ENCODE measurements at regions of chr13 and their contacts with region 1.

Region 1: GRCh38 chr13:50801087-50801931 is 42.2 kb downstream of the DLEU7 start:
- DNase-seq: peak; percentile 37
- H3K4me3 ChIP-seq: no peak overlapping the region
- H3K27ac ChIP-seq: no peak overlapping the region
- H3K27me3 ChIP-seq: no peaks in the 10 kb centered on the region
- CTCF ChIP-seq: peak; percentile 85

Region 2: GRCh38 chr13:50208826-50209335 is 592.4 kb before region 1 on chr13:
- CTCF ChIA-PET with region 1: no interaction called
- POLR2A ChIA-PET with region 1: no interaction called
- DNase-seq: peak; percentile 44
- H3K4me3 ChIP-seq: peak overlapping the region; percentile 33
- H3K27ac ChIP-seq: peak overlapping the region; percentile 58
- H3K27me3 ChIP-seq: no peaks in the 10 kb centered on the region
- CTCF ChIP-seq: no peak

Region 3: DNA sequence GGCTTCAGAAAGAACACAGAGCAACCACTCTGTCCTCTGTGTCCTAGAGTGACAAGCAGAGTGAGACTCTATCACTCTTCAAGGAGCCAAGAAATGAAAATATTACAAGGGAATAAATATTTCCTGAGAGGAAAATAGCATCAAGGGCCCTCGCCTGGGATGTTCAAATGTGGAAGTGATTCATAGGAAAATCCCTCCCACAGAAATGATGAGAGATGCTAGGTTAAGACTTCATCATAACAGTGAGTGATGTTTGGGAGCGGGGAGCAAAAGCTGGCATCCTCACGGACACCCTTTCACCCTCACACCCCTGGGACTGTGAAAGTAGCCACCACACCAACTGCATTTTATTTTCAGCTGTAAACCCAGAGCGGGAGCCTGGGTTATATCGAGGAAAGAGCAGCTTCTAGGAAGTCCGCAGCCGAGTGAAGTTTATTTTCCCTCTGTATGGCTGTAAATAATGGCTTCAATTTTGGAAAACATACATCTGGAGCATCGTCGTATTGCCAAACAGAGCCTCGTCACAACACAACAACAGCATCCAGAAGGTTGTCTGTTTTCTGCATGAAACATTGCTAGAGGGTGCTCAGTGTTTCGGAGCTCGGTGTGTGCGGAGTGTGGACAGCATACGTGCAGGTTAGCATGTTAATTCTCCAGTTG is 12.6 kb before region 1 on chr13:
- CTCF ChIA-PET with region 1: interaction called, 11 read pairs
- POLR2A ChIA-PET with region 1: no interaction called
- DNase-seq: no peak
- H3K4me3 ChIP-seq: peak overlapping the region; percentile 20; the same call in 1 of the 2 replicates
- H3K27ac ChIP-seq: no peak overlapping the region
- H3K27me3 ChIP-seq: peaks cover 3% of the 10 kb centered on the region
- CTCF ChIP-seq: no peak

Region 4: DNA sequence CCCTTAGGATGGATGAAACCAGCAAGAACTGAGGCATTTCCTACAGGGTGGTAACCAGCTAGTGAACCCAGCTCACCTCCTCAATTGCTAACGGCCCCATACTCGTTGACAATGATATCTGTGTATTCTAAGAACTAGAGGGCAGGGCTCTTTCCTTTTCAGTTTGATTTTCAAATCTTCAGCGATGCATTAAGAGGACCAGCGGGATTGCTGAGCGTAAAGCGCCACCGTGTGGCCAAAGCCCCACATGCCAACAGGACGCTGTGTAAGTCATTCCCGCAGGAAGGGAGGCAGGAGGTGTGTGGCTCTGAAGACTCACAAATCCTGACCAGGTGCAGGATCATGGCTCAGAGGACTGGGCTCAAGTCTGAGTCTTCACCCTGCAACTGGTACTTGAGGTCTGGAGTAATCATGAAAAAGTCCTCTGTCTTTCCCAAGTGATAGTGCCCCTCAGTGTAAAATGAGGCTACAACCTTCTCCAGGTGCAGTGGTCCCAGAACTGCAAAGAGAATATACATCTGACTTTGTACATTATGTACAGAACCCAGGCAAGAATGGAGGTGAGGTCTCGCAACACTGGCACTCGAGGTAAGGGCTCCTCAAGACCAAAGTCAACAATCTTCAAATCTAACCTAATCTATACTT is 268.8 kb after region 1 on chr13:
- CTCF ChIA-PET with region 1: interaction called, 16 read pairs
- POLR2A ChIA-PET with region 1: no interaction called
- DNase-seq: peak; percentile 45
- H3K4me3 ChIP-seq: no peak overlapping the region
- H3K27ac ChIP-seq: no peak overlapping the region
- H3K27me3 ChIP-seq: peaks cover 13% of the 10 kb centered on the region
- CTCF ChIP-seq: peak; percentile 97

Measured in AG04450 (cell line).